PC-9 (cell line): ENCODE measurements at regions of chr4 and their contacts with region 1.

Region 1: GRCh38 chr4:140720387-140721304 is 35.5 kb downstream of the TBC1D9 start:
- DNase-seq: no peak
- H3K4me3 ChIP-seq: no peak overlapping the region
- H3K27ac ChIP-seq: no peak overlapping the region
- H3K4me1 ChIP-seq: peaks cover 32% of the 10 kb centered on the region
- H3K27me3 ChIP-seq: no peaks in the 10 kb centered on the region
- CTCF ChIP-seq: no peak

Region 2: GRCh38 chr4:140829825-140830224 is 109.2 kb after region 1 on chr4:
- CTCF ChIA-PET with region 1: no interaction called
- POLR2A ChIA-PET with region 1: interaction called, 11 read pairs
- intact Hi-C with region 1: no loop called
- DNase-seq: no peak
- H3K4me3 ChIP-seq: no peak overlapping the region
- H3K27ac ChIP-seq: no peak overlapping the region
- H3K4me1 ChIP-seq: no peaks in the 10 kb centered on the region
- H3K27me3 ChIP-seq: no peaks in the 10 kb centered on the region
- CTCF ChIP-seq: no peak

Region 3: GRCh38 chr4:140996766-140997165 is 276.1 kb after region 1 on chr4:
- CTCF ChIA-PET with region 1: no interaction called
- POLR2A ChIA-PET with region 1: no interaction called
- intact Hi-C with region 1: no loop called
- DNase-seq: no peak
- H3K4me3 ChIP-seq: no peak overlapping the region
- H3K27ac ChIP-seq: no peak overlapping the region
- H3K4me1 ChIP-seq: no peaks in the 10 kb centered on the region
- H3K27me3 ChIP-seq: no peaks in the 10 kb centered on the region
- CTCF ChIP-seq: no peak